Gastrocnemius medialis (tissue), 4 donors: ENCODE measurements at regions of chr15 and their contacts with region 1.

Region 1: DNA sequence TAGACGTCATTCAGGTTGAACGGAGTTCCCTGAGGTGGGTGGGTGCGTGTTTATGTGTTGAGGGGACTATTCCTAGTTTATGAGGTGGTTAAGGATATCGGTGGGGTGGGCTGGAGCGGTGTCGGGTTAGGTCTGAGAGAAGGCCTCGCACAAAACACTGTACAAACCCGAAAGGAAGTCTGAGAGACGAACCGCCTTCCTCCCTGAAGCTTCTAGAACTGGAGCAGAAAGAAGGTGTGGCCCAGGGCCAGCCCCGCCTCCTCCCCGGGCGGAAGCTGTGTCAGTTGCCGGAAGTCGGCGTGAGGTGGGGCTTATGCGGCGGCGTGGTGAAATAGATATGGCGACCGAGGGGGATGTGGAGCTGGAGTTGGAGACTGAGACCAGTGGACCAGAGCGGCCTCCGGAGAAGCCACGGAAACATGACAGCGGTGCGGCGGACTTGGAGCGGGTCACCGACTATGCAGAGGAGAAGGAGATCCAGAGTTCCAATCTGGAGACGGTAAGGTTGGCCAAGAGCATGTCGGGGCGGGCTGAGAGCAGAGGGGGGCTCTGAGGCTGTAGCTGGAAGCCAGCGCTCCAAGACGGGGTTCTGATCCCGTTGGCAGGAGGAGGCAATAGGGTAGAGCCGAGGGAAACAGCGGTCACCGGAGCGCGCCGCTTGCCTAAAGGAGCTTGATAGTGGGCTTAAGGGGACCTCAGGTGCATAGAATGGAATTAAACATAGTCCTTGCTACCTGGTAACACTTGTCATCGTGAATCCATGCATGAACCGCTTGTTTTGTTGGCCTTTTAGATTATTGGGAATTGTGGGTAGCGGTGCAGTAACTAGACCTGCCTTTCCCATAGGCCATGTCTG is at the start of gene HYPK:
- DNase-seq: peak; percentile 93 to 95
- ATAC-seq: peak; percentile 90 to 94
- H3K4me3 ChIP-seq: peak within 1 kb of the TSS; percentile 74 to 97 (median 88)
- H3K27ac ChIP-seq: peak within 1 kb of the TSS; percentile 86 to 100 (median 92)
- H3K4me1 ChIP-seq: peaks cover 35 to 38% of the 10 kb centered on the region in 2 donors
- H3K27me3 ChIP-seq: no peaks in the 10 kb centered on the region
- CTCF ChIP-seq: no peak
- POLR2A ChIP-seq: peak; percentile 55 to 61
- total RNA-seq, gene HYPK: 19.5 to 33.9 (median 24.7) TPM

Region 2: GRCh38 chr15:43776718-43777583 is 23.6 kb before region 1 on chr15 and contains the start of gene ELL3:
- in situ Hi-C with region 1: no loop called
- intact Hi-C with region 1: no loop called
- DNase-seq: peak; percentile 40 to 66
- ATAC-seq: peak; percentile 68 to 73
- H3K4me3 ChIP-seq: peak within 1 kb of the TSS; percentile 61 to 84 (median 76)
- H3K27ac ChIP-seq: peak within 1 kb of the TSS; percentile 86 to 90 (median 88)
- H3K4me1 ChIP-seq: peaks cover 9 to 11% of the 10 kb centered on the region in 2 donors
- H3K27me3 ChIP-seq: no peaks in the 10 kb centered on the region
- CTCF ChIP-seq: peak; percentile 62 to 84 (median 66)
- POLR2A ChIP-seq: peak; percentile 26 to 43
- total RNA-seq, gene ELL3: 2.1 to 6.3 (median 2.6) TPM

Region 3: GRCh38 chr15:43824302-43825246 is 24.1 kb after region 1 on chr15 and contains the start of gene MFAP1:
- in situ Hi-C with region 1: no loop called
- intact Hi-C with region 1: loop called (anchors 1 kb)
- DNase-seq: peak; percentile 95
- ATAC-seq: peak; percentile 99
- H3K4me3 ChIP-seq: peak within 1 kb of the TSS; percentile 65 to 90 (median 86)
- H3K27ac ChIP-seq: peak within 1 kb of the TSS; percentile 85 to 93 (median 90)
- H3K4me1 ChIP-seq: peaks cover 18 to 37% of the 10 kb centered on the region in 2 donors
- H3K27me3 ChIP-seq: peaks cover 4 to 25% (median 24%) of the 10 kb centered on the region in 3 donors
- CTCF ChIP-seq: no peak
- POLR2A ChIP-seq: peak; percentile 82 to 84
- total RNA-seq, gene MFAP1: 10.8 to 26.3 (median 14.7) TPM

Region 4: GRCh38 chr15:43872416-43873020 is 72.0 kb after region 1 on chr15:
- in situ Hi-C with region 1: no loop called
- intact Hi-C with region 1: no loop called
- DNase-seq: no peak
- ATAC-seq: no peak
- H3K4me3 ChIP-seq: no peak overlapping the region
- H3K27ac ChIP-seq: no peak overlapping the region
- H3K4me1 ChIP-seq: no peaks in the 10 kb centered on the region
- H3K27me3 ChIP-seq: no peaks in the 10 kb centered on the region
- CTCF ChIP-seq: no peak
- POLR2A ChIP-seq: no peak